ENCODE measurements at regions of chr1 and their contacts with region 1.

Region 1: GRCh38 chr1:2174348-2175054 is 20.1 kb downstream of the FAAP20 start:
- DNase-seq: peak; percentile 54
- H3K4me3 ChIP-seq: no peak overlapping the region
- H3K27ac ChIP-seq: no peak overlapping the region
- H3K4me1 ChIP-seq: no peaks in the 10 kb centered on the region
- H3K27me3 ChIP-seq: no peaks in the 10 kb centered on the region
- CTCF ChIP-seq: peak; percentile 91 to 95
- POLR2A ChIP-seq: no peak

Region 2: DNA sequence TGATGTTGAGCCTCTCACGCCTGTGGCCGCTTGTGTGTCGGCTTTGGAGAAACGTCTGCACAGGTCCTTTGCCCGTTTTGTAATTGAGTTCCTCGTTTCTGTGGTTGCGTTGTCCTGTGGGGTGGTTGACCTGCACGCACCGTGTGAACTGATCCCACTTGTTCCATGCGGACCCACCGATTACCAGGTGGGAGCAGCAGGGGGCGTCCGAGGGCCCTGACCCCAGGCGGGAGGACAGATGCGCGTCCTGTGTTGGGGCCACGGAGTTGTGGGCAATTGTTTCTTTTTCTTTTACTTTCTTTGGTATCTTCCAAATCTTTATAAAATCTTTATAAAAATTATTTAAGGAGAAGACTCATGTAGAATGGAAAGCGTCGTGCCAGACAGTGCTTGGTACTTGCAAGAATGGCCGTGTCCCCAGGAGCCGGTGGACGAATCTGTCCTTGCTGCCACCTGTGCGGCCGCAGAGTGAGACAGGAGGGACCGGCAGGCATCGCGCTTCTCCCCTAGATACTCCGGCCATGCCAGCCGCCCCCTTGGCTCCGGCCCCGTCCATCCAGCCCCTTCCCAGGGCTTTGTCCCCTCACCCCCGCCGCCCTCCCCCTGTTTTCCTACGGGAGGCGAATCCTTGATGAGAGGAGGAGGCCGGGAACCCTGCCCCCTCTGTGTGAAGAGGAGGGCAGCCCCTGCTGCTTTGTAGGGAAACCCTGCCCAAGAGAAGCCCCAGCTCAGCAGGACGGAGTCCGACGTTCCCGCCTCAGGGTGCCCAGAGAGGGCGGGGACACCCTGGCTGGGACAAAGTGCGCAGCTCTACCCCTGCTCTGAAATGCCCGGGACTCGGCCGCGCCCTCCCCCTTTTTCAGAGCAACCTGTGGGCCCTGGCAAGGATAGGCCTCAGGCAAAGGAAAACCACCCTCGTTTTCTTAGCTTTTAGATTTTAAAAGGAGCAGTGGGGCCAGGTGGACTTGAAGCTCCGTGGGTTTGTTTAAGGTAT is 82.6 kb before region 1 on chr1:
- CTCF ChIA-PET with region 1: interaction called, 31 read pairs
- POLR2A ChIA-PET with region 1: no interaction called
- dilution Hi-C with region 1: no loop called
- intact Hi-C with region 1: loop called (anchors 1 kb)
- DNase-seq: peak; percentile 13
- H3K4me3 ChIP-seq: no peak overlapping the region
- H3K27ac ChIP-seq: no peak overlapping the region
- H3K4me1 ChIP-seq: no peaks in the 10 kb centered on the region
- H3K27me3 ChIP-seq: no peaks in the 10 kb centered on the region
- CTCF ChIP-seq: peak; percentile 42 to 60
- POLR2A ChIP-seq: no peak

Region 3: DNA sequence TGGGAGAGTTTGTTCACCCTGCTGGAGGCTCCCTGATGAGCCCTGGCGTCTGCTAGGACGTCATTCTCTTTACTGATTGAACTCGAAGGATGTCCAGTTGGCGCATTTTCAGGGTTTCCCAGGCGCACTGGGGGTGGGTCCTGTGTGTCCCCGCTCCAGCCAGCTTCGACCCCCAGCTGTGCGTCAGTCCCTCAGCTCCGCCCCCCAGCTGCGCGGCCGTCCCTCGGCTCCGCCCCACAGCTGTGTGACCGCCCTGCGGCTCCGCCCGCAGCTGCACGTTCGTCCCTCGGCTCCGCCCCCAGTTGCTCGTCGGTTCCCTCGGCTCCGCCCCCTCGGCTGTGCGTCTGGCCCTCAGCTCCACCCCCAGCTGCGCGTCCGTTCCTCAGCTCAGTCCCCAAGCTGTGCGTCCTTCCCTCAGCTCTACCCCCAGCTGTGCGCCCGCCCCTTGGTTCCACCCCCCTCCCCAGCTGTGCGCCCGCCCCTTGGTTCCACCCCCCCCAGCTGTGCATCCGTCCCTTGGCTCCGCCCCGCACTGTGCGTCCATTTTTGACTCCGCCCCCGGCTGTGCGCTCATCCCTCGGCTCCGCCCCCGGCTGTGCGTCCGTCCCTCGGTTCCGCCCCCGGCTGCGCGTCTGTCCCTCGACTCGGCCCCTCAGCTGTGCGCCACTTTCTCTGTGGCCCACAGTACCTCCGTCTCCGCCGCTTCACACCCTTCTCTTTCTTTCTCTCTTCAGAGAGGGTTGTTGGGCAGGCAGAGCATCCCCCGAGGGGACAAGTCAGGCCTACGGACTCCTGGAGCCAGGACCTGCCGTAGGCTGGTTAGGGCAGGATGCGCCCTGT is 41.2 kb before region 1 on chr1:
- CTCF ChIA-PET with region 1: interaction called, 73 read pairs
- POLR2A ChIA-PET with region 1: no interaction called
- dilution Hi-C with region 1: no loop called
- intact Hi-C with region 1: loop called (anchors 2 kb)
- DNase-seq: peak; percentile 96
- H3K4me3 ChIP-seq: peak overlapping the region in 2 of 3 experiments; percentile 30 to 39
- H3K27ac ChIP-seq: peak overlapping the region; percentile 31
- H3K4me1 ChIP-seq: peaks cover 4% of the 10 kb centered on the region
- H3K27me3 ChIP-seq: no peaks in the 10 kb centered on the region
- CTCF ChIP-seq: no peak
- POLR2A ChIP-seq: no peak

Region 4: GRCh38 chr1:2148691-2149090 is 25.8 kb before region 1 on chr1:
- CTCF ChIA-PET with region 1: interaction called, 32 read pairs
- POLR2A ChIA-PET with region 1: no interaction called
- dilution Hi-C with region 1: no loop called
- intact Hi-C with region 1: no loop called
- DNase-seq: peak; percentile 29
- H3K4me3 ChIP-seq: no peak overlapping the region
- H3K27ac ChIP-seq: peak overlapping the region; percentile 21
- H3K4me1 ChIP-seq: peaks cover 12% of the 10 kb centered on the region
- H3K27me3 ChIP-seq: no peaks in the 10 kb centered on the region
- CTCF ChIP-seq: no peak
- POLR2A ChIP-seq: no peak

Region 5: DNA sequence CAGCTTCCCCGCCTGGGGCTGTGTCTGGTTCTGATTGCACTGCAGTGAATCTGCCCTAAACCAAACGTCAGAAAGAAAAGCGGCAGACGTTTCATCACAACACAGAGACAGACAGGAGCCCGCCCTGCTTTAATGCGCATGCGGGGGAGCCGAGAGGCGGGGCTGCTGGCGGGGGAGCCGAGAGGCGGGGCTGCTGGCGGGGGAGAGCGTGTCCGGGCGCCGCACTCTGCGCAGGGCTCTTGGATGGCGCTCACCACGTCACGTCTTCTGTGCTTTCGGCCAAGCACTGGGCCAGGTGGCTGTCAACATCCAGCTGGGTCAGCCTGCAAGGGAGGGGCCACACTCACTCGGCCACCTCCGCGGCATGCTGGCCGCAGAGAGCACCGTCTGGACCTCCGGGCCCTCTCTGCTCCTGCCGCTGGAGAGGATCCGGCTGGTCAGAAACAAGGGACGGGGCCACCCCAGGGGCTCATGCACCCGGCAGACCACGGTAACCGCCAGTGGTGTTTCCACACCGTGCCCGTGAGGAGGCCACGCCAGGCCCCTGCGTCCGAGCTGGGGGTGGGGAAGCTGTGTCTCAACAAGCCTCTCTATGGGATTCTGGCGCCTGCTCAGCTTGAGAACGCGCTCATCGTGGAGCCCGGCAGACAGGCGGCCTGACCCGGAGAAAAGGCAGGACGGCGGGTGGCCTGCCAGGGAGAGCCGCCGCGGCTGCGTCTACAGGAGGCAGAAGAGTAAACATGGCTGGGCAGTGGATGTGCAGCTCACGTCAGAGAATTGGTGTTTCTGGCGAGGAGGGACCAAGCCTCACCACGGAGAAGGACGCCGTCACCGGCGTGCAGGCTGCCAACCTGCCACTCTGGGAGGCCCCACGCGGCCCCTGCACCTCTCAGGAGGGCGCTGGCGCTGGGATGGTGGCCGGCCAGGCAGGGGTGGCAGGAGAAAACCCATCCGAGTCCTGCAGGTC is 15.2 kb after region 1 on chr1:
- CTCF ChIA-PET with region 1: interaction called, 29 read pairs
- POLR2A ChIA-PET with region 1: no interaction called
- dilution Hi-C with region 1: no loop called
- intact Hi-C with region 1: no loop called
- DNase-seq: peak; percentile 96
- H3K4me3 ChIP-seq: peak overlapping the region; percentile 39 to 54 (median 39)
- H3K27ac ChIP-seq: peak overlapping the region; percentile 78
- H3K4me1 ChIP-seq: peaks cover 18% of the 10 kb centered on the region
- H3K27me3 ChIP-seq: no peaks in the 10 kb centered on the region
- CTCF ChIP-seq: no peak
- POLR2A ChIP-seq: peak; percentile 78